Activated naive CD4-positive, alpha-beta T cell treated with anti-CD3 and anti-CD28 coated beads for 36 hours (primary cell): ENCODE measurements at regions of chr9 and their contacts with region 1.

Region 1: DNA sequence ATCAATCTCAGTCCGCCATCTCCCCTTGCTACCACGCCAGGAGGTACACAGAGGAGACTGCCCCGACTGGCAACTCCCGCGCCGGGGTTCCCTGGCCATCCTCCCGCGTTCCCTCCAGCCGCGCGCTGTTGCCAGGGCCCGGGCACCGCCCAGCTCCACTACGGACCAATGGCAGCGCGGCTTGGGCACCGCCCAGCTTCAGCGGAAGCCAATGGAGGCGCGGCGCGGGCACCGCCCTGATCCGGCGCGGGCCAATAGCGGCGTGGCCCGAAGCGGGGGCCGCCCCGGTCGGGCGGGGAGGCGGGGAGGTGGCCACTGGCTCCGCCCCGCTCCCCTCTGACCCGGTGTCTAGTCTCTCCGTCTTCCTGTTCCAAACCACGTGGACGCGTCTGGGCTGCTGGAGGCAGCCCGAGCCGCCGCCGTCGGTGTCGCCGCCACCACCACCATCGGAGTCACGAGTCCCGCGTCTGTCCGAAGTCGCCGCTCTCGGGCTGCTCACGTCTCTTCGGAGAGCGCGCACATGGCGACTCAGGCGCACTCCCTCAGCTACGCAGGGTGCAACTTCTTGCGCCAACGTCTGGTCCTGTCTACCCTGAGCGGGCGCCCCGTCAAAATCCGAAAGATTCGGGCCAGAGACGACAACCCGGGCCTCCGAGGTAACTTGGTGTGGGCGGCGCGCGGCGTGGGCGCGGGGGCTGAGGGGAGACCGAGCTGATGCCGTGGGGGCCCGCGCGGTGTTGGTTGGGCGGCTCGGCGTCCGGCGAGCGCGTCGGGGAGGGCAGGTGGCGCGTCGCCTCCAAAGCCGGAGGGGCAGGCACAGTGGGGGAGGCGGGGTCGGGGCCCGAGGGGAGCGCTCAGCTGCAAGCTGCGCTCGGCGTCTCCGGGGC is at the start of gene RCL1:
- DNase-seq: peak; percentile 97
- H3K4me3 Mint-ChIP-seq: peak within 1 kb of the TSS; percentile 96
- H3K27ac Mint-ChIP-seq: peak within 1 kb of the TSS; percentile 84
- H3K4me1 Mint-ChIP-seq: peaks cover 49% of the 10 kb centered on the region
- H3K27me3 Mint-ChIP-seq: no peaks in the 10 kb centered on the region
- total RNA-seq, gene RCL1: 26.9 to 30.7 TPM

Region 2: GRCh38 chr9:4740638-4741364 is 52.0 kb before region 1 on chr9 and contains the start of gene AK3:
- CTCF ChIA-PET with region 1: no interaction called
- intact Hi-C with region 1: loop called (anchors 2 kb)
- DNase-seq: peak; percentile 90
- H3K4me3 Mint-ChIP-seq: peak within 1 kb of the TSS; percentile 91
- H3K27ac Mint-ChIP-seq: peak within 1 kb of the TSS; percentile 89
- H3K4me1 Mint-ChIP-seq: peaks cover 55% of the 10 kb centered on the region
- H3K27me3 Mint-ChIP-seq: no peaks in the 10 kb centered on the region
- total RNA-seq, gene AK3: 50.2 to 50.9 TPM

Region 3: GRCh38 chr9:4814913-4815312 is 22.1 kb after region 1 on chr9:
- CTCF ChIA-PET with region 1: interaction called, 5 read pairs
- intact Hi-C with region 1: loop called (anchors 1 kb)
- DNase-seq: no peak
- H3K4me3 Mint-ChIP-seq: peak overlapping the region; percentile 9
- H3K27ac Mint-ChIP-seq: peak overlapping the region; percentile 87
- H3K4me1 Mint-ChIP-seq: peaks cover 60% of the 10 kb centered on the region
- H3K27me3 Mint-ChIP-seq: no peaks in the 10 kb centered on the region

Region 4: DNA sequence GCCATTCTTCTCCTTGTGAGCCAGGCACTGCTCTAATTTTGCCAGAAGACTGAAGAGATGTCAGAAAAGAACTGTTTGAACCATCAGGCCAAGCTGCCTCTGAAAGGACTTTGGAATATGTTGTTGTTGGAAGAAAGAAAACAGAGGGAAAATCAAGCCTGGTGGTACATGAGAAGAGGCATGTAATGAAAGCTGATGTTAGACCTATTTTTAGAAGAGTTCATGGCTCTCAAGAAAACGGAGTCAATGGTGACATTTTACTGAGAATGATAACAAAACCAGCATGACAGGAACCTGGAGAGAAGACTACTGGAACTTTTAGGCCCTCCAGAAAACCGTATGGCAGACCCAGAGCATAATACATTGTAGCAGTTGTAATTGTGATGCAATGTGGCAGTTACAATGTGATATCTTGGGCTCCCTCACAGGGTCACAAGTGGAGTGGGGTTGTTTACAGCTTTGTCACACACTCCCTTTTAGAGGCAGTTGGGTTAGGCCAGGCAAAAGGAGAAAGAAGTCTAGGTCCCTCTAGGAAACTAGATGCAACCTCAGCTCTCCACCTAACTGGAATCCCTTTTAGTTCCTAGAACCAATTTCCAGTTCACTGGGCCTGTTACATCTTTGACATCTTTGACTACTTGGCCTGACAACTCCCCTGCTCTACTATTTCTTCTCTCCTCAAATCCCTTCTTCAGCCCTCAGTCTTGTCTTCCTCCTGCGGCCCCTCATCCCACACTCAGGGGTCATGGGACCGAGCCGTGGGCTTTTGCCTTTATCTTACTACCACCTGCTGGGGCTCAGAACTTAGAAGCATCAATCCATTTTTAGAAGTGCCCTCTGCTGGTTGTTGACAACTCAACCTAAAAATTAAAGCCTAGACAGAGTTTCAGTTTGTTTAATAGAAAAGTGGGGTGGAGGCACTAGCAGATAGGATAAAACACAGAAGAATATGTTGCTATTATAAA is 131.0 kb after region 1 on chr9:
- CTCF ChIA-PET with region 1: no interaction called
- intact Hi-C with region 1: loop called (anchors 2 kb)
- DNase-seq: peak; percentile 48
- H3K4me3 Mint-ChIP-seq: no peak overlapping the region
- H3K27ac Mint-ChIP-seq: peak overlapping the region; percentile 57
- H3K4me1 Mint-ChIP-seq: peaks cover 32% of the 10 kb centered on the region
- H3K27me3 Mint-ChIP-seq: no peaks in the 10 kb centered on the region

Region 5: GRCh38 chr9:4970970-4971641 is 178.3 kb after region 1 on chr9:
- CTCF ChIA-PET with region 1: no interaction called
- intact Hi-C with region 1: loop called (anchors 1 kb)
- DNase-seq: peak; percentile 91
- H3K4me3 Mint-ChIP-seq: no peak overlapping the region
- H3K27ac Mint-ChIP-seq: no peak overlapping the region
- H3K4me1 Mint-ChIP-seq: peaks cover 23% of the 10 kb centered on the region
- H3K27me3 Mint-ChIP-seq: no peaks in the 10 kb centered on the region